PC-9 (cell line): ENCODE measurements at regions of chr4 and their contacts with region 1.

Region 1: GRCh38 chr4:173420324-173420752 is 21.4 kb upstream of the SCRG1 start:
- DNase-seq: no peak
- H3K4me3 ChIP-seq: no peak overlapping the region
- H3K27ac ChIP-seq: no peak overlapping the region
- H3K4me1 ChIP-seq: peaks cover 27% of the 10 kb centered on the region
- H3K27me3 ChIP-seq: no peaks in the 10 kb centered on the region
- CTCF ChIP-seq: peak; percentile 62

Region 2: DNA sequence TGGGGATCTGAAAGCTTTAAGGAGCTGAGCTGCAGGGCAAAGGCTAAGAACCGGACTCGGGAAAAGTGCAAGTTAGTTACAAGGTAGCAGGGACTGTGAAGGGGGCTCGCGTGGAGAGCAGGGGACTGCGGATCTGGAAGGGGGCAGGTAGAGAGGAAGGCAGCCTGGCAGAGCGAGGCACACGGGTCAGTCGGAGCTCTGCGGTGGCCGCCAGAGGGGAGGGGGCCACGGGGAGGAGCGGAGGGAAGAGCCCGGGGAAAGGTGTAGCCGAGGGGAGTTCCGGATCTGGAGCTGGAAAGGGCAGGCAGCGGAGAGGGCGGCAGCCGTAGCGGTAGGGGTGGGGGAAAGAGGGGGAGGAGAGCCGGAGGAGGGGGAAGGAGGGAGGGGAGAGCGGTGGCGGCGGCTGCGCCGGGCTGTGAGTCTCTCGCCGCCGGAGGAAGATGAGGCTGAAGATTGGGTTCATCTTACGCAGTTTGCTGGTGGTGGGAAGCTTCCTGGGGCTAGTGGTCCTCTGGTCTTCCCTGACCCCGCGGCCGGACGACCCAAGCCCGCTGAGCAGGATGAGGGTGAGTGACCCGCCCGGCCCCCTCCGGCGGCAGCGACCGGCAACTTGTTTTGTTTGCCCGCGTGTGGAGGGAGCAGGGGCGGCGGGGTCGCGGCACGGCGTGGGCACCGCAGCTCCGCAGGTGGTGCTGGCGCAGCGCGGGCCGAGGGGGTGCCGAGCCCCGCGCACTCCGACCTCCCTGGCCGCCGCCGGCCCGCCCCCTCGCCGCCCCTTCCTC is 251.8 kb before region 1 on chr4 and contains the start of gene GALNT7:
- CTCF ChIA-PET with region 1: no interaction called
- POLR2A ChIA-PET with region 1: no interaction called
- intact Hi-C with region 1: no loop called
- DNase-seq: peak; percentile 57 to 75
- H3K4me3 ChIP-seq: peak within 1 kb of the TSS; percentile 87
- H3K27ac ChIP-seq: peak within 1 kb of the TSS; percentile 91
- H3K4me1 ChIP-seq: peaks cover 14% of the 10 kb centered on the region
- H3K27me3 ChIP-seq: no peaks in the 10 kb centered on the region
- CTCF ChIP-seq: no peak
- total RNA-seq, gene GALNT7: 57.2 and 72.5 TPM in 2 replicates

Region 3: GRCh38 chr4:173257732-173258717 is 162.3 kb before region 1 on chr4:
- CTCF ChIA-PET with region 1: no interaction called
- POLR2A ChIA-PET with region 1: no interaction called
- intact Hi-C with region 1: loop called (anchors 5 kb)
- DNase-seq: peak; percentile 48 to 57
- H3K4me3 ChIP-seq: no peak overlapping the region
- H3K27ac ChIP-seq: no peak overlapping the region
- H3K4me1 ChIP-seq: peaks cover 6% of the 10 kb centered on the region
- H3K27me3 ChIP-seq: no peaks in the 10 kb centered on the region
- CTCF ChIP-seq: peak; percentile 80

Region 4: DNA sequence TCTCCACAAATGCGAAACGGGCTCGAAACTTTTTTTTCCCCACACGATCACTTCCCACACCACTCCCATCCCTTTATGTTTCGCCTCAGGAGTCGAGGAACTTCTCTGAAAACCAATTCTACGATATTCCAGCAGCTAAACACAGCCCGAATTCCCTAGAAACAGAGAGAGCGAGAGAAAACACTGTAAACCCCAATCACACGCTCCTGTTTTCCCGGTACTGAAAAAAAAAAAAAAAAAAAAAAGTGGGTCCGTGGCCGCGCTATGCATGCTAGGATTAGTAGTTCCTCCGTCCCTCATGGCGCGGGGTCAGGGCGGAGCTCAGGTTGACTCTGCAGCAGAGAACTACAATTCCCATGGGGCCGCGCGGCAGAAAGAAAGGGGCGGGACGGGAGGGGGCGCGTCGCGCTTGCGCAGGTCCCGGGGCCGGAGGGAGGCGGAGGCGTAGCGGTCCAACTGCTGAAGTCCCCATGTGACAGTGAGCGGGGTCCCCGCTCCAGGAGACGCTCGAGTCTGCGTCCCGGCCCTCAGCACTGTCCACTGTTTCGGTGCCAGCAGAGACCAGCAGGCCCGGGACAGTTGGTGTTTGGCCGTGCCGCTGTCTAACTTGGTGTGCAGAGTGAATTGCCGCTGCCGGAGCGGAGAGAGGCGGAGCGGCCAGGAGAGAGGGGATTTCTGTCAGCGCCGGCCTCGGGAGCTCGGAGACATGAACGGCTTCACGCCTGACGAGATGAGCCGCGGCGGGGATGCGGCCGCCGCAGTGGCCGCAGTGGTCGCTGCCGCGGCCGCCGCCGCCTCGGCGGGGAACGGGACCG is 49.7 kb before region 1 on chr4 and contains the start of gene SAP30:
- CTCF ChIA-PET with region 1: interaction called, 5 read pairs
- POLR2A ChIA-PET with region 1: no interaction called
- intact Hi-C with region 1: loop called (anchors 2 kb)
- DNase-seq: peak; percentile 82 to 93
- H3K4me3 ChIP-seq: peak within 1 kb of the TSS; percentile 82
- H3K27ac ChIP-seq: peak within 1 kb of the TSS; percentile 59
- H3K4me1 ChIP-seq: no peaks in the 10 kb centered on the region
- H3K27me3 ChIP-seq: no peaks in the 10 kb centered on the region
- CTCF ChIP-seq: no peak
- total RNA-seq, gene SAP30: 8.0 and 11.4 TPM in 2 replicates

Region 5: GRCh38 chr4:173669460-173670179 is 249.3 kb after region 1 on chr4:
- CTCF ChIA-PET with region 1: no interaction called
- POLR2A ChIA-PET with region 1: no interaction called
- intact Hi-C with region 1: no loop called
- DNase-seq: no peak
- H3K4me3 ChIP-seq: no peak overlapping the region
- H3K27ac ChIP-seq: no peak overlapping the region
- H3K4me1 ChIP-seq: no peaks in the 10 kb centered on the region
- H3K27me3 ChIP-seq: no peaks in the 10 kb centered on the region
- CTCF ChIP-seq: no peak

Region 6: DNA sequence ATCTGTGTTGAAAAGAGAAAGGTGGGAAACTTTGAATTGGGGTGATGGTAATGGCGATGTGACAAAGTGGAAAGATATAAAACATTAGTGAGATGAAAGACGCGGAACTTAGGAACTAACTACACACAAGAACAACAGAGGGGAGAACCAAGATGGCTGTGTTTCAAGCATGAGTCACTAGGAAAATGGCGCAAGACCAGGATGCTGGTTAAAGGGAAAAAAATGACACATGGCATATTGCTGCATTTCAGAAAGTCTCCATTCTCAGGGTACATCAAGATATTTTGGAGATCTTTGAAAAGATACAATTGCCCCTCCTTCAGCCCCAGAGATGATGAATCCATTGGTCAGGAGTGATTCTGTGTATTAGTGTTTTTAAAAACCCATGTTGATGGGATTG is 698.7 kb after region 1 on chr4:
- CTCF ChIA-PET with region 1: no interaction called
- POLR2A ChIA-PET with region 1: no interaction called
- intact Hi-C with region 1: loop called (anchors 10 kb)
- DNase-seq: no peak
- H3K4me3 ChIP-seq: no peak overlapping the region
- H3K27ac ChIP-seq: no peak overlapping the region
- H3K4me1 ChIP-seq: no peaks in the 10 kb centered on the region
- H3K27me3 ChIP-seq: no peaks in the 10 kb centered on the region
- CTCF ChIP-seq: no peak

Region 7: DNA sequence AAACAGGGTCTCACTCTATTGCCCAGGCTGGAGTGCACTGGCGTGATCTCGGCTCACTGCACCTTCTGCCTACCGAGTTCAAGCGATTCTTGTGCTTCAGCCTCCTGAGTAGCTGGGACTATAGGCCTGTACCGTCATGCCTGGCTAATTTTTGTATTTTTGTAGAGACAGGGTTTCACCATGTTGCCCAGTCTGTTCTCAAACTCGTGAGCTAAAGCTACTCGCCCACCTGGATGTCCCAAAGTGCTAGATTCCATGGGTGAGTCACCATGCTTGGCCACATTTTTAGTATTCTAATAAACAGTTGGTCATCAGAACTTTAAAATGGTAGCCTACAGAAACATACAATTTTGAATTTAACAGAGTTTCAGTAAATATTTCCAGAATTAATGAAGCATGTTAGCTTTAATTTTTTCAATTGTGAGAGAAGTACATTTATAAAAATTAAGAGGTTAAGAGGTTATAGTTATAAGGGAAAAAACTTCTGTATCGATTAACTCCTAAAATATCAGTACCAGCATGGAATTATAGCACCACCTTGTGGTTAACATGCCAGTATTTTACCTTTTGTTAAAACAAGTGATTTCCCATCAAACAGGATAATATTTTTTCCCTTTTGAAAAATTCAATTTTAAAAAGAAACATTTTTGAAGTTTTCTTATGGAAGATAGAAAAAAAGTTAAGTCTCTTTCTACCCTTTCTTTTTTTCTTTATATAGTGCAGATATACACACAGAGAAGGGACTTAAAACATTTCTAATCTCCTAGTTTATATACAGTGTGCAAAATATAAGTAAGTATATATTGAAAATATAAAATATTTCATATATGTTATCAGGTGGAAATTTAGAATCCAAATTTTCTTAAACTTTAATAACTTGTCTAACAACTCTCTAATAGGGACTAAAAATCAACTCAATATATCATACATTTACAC is 898.8 kb after region 1 on chr4:
- CTCF ChIA-PET with region 1: no interaction called
- POLR2A ChIA-PET with region 1: no interaction called
- intact Hi-C with region 1: loop called (anchors 2 kb)
- DNase-seq: no peak
- H3K4me3 ChIP-seq: no peak overlapping the region
- H3K27ac ChIP-seq: no peak overlapping the region
- H3K4me1 ChIP-seq: no peaks in the 10 kb centered on the region
- H3K27me3 ChIP-seq: no peaks in the 10 kb centered on the region
- CTCF ChIP-seq: peak; percentile 77

Region 8: GRCh38 chr4:174591243-174592021 is 1171.1 kb after region 1 on chr4:
- CTCF ChIA-PET with region 1: no interaction called
- POLR2A ChIA-PET with region 1: no interaction called
- intact Hi-C with region 1: no loop called
- DNase-seq: no peak
- H3K4me3 ChIP-seq: no peak overlapping the region
- H3K27ac ChIP-seq: no peak overlapping the region
- H3K4me1 ChIP-seq: peaks cover 4% of the 10 kb centered on the region; the same call in 1 of the 2 replicates
- H3K27me3 ChIP-seq: no peaks in the 10 kb centered on the region
- CTCF ChIP-seq: no peak